A549 (cell line): ENCODE measurements at regions of chr6 and their contacts with region 1.

Region 1: DNA sequence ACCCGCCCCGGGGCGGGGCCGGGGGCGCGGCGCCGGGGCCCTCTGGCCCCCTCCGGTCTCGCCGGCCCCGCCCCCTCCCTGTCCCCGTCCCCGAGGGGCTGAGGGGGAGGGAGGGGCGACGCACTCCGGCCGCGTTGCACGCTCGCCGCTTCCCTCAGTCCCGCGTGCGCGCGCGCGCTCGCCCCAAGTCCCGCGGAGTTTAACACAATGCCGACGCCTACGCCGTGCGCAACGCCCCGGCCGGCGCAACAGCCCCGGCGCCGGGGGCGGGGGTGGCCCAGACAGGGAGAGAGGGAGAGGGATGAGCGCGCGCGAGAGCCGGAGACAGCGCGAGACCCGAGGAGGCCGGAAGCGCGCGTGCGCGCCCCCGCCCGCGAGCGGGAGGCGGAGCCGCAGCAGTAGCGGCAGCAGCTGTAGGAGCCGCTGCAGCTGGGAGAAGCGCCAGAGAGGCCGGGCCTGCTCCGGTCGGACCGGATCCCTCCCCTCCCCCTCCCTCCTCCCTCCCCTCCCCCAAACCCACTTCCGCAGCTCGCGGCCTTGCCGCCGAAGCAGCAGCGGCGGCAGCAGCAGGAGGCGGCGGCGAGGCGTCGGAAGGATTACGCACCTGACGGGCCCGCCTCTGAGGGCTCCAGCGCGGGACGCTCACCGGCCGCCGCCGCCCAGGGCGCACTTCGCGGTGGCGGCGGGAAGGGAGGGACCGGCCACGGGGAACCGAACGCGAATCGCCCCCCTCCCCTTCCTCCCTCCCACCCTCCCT is 905 bp downstream of the ZBTB2 start:
- DNase-seq: peak; percentile 74 to 97
- ATAC-seq: peak; percentile 73 to 93
- H3K4me3 ChIP-seq: peak overlapping the region; percentile 93
- H3K27ac ChIP-seq: peak overlapping the region; percentile 100
- H3K4me1 ChIP-seq: peaks cover 33% of the 10 kb centered on the region
- CTCF ChIP-seq: no peak
- EP300 ChIP-seq: no peak
- POLR2A ChIP-seq: peak; percentile 53
- RAD21 ChIP-seq: no peak

Region 2: DNA sequence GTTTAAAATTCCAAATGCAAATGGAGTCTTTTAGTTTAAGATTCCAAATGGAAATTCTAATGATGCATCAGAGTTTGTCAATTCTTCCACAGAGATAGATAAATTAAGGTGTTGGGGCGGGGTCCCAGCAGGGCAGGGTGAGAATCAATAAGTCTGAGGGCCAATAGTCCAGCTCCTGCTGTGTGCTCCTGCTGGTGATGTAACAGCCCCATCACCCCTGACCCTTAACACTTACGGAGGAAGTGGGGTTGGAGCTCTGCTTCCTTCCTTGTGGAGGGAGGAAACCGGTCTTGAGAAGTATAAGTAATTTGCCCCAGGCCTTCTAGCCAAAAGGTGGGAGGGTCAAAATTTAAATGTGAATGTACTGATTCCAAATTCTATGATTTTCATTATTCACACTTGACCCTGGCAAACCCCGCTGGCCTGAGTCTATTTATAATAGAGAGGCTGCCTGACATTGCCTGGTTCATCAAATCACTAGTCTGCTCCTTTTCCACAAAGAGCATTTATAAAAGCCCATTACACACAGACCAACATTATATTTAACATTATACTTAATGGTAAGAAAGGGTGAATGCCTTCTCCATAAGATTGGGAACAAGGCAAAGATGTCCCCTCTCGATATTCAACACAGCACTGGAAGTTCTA is 16.3 kb before region 1 on chr6:
- CTCF ChIA-PET with region 1: no interaction called
- POLR2A ChIA-PET with region 1: interaction called, 19 read pairs
- DNase-seq: no peak
- ATAC-seq: peak in 1 of 2 experiments; percentile 42; a peak in 3 of 6 replicates
- H3K4me3 ChIP-seq: no peak overlapping the region
- H3K27ac ChIP-seq: peak overlapping the region; percentile 67 to 70
- H3K4me1 ChIP-seq: peaks cover 16% of the 10 kb centered on the region; the same call in 2 of the 3 replicates
- CTCF ChIP-seq: no peak
- EP300 ChIP-seq: no peak
- POLR2A ChIP-seq: no peak
- RAD21 ChIP-seq: no peak

Region 3: GRCh38 chr6:151409260-151409659 is 18.8 kb after region 1 on chr6:
- CTCF ChIA-PET with region 1: interaction called, 29 read pairs
- POLR2A ChIA-PET with region 1: interaction called, 3 read pairs
- DNase-seq: no peak
- ATAC-seq: no peak
- H3K4me3 ChIP-seq: no peak overlapping the region
- H3K27ac ChIP-seq: no peak overlapping the region
- H3K4me1 ChIP-seq: no peaks in the 10 kb centered on the region
- CTCF ChIP-seq: no peak
- EP300 ChIP-seq: no peak
- POLR2A ChIP-seq: no peak
- RAD21 ChIP-seq: no peak

Region 4: DNA sequence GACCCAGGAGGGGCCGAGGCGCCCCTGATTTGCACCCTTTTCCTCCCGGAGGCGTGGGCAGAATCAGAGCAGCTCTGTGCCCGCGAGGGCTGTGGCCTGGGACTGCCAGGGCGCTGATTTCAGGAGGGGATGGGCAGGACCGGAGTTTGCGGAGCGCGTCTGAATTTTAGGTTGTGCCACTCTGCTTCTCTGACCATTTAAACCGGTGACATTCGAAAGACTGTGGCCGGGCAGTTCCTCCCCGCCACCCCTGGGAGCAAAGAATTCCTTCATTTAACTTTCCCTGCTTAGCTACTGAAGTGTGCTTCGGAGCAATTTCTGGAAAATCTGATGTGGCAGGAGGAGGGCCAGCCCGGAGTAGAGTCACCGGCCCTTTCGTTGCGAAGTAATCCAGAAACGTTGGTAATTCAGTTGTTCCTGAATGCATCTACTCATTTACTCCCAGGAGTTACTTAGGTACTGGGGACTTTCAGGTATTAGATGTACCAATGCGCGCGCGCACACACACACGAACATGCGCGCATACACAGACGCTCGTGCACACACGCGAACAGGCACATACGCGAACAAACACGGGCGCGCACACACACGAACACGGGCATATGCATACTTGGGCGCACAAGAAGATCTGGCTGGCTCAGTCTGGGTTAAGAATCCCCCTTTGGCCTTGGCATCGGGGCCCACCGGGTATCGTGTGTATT is 103.9 kb after region 1 on chr6:
- CTCF ChIA-PET with region 1: no interaction called
- POLR2A ChIA-PET with region 1: no interaction called
- DNase-seq: peak; percentile 15 to 63
- ATAC-seq: peak; percentile 65 to 75
- H3K4me3 ChIP-seq: peak overlapping the region; percentile 75
- H3K27ac ChIP-seq: peak overlapping the region; percentile 70 to 87
- H3K4me1 ChIP-seq: no peaks in the 10 kb centered on the region
- CTCF ChIP-seq: no peak
- EP300 ChIP-seq: no peak
- POLR2A ChIP-seq: no peak
- RAD21 ChIP-seq: no peak